Posterior vena cava (tissue), 2 donors: ENCODE measurements at regions of chr17 and their contacts with region 1.

Region 1: DNA sequence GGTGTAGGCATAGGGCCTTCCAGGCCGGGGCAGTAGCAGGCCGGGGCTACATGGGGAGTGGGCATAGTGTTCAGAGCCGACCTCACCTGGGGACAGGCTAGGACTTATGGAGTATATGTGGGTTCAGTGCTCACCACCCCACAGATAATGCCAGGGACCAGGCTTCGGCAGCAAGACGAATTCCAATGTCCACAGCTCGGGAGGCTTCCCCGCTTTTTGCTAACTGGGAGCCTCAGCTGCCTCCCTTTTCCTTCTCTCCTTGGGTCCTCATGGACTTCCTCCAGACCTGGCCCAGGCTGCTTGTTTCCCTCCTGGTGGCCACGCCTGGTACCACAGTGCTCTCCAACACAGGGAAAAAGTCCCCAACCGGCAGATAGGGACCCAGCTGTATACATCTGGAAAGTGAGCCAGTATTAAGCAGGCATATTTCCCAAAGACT is 20.1 kb upstream of the SLC46A1 start:
- DNase-seq: no peak

Region 2: GRCh38 chr17:28466521-28467048 is 40.5 kb after region 1 on chr17:
- intact Hi-C with region 1: loop called in 1 of 2 experiments (anchors 1 kb)
- DNase-seq: no peak